PC-3 (cell line): ENCODE measurements at regions of chr1 and their contacts with region 1.

Region 1: GRCh38 chr1:8987881-8988617 is 38.2 kb downstream of the SLC2A7 start:
- DNase-seq: peak; percentile 64
- ATAC-seq: no peak; the same call in 1 of the 2 replicates
- H3K4me3 ChIP-seq: no peak overlapping the region
- H3K27ac ChIP-seq: peak overlapping the region; percentile 95
- H3K4me1 ChIP-seq: peaks cover 31% of the 10 kb centered on the region
- H3K27me3 ChIP-seq: no peaks in the 10 kb centered on the region
- CTCF ChIP-seq: peak; percentile 93

Region 2: DNA sequence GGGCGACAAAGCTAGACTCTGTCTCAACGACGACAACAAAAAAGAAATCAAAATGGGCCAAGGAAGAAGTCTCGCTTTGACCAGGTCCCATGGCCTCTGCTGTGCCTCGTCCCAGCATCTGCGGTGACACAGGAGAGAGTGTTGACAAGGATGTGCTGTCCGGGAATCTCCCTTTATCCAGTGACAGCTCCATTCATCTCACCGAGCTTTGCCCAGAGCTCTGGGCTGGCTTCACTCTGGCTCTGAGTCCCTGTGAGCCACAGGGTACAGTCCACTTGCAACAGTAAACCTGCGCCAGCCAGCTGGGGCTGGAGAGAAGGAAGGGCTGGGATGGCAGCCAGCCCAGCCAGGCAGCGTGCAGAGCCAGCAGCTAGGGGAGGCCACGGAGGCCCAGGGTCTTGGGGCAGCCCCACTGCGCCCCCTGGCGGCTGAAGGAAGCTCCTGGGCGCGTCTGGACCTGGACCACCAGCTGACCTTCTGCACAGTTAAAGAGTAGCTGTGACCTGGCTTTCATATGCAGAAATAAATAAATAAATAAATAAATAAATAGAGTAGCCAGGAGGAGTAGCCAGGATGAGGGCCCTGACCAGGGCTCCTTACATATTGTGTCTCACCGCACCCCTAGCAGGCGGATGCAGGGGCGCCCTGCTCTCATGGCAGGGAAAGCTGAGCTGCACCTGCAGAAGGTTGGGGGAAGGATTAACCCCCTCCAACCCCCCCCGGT is 139.2 kb before region 1 on chr1:
- CTCF ChIA-PET with region 1: interaction called, 11 read pairs
- POLR2A ChIA-PET with region 1: no interaction called
- intact Hi-C with region 1: no loop called
- DNase-seq: peak; percentile 91
- ATAC-seq: peak; percentile 98
- H3K4me3 ChIP-seq: no peak overlapping the region
- H3K27ac ChIP-seq: no peak overlapping the region
- H3K4me1 ChIP-seq: peaks cover 5% of the 10 kb centered on the region
- H3K27me3 ChIP-seq: no peaks in the 10 kb centered on the region
- CTCF ChIP-seq: peak; percentile 73

Region 3: DNA sequence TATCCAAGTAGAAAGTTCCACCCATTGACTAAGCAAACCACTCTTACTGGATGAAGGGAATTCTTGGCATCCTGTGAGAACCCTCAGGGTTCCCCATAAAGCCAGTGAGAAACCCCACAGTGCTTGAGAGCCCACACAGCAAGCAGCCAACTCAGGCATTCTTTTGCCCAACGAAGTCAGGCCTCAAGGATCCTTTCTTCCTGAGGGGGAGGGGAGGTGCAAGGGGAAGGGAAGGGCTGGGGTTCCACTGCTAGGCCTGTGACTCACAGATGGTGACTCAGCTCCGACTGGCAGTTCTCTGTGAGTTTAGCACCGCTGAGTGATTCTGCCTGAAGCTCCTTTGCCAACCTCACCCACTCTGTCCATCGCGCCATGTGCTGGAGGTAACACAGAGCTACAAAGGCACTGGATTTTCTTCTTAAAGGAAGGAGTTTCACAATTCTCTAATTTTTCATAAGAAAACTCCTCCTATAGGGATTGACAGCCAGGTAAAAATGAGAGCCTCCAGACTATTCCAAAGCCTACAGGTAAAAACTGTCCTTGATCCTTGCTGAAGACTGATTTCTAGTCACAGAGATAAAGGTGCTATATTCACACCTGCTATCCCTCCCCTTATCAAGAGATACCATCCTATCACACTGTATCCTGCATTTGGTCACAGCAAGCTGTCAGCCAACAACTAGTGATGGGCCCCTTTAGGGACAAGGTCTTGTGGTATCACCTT is 114.4 kb before region 1 on chr1:
- CTCF ChIA-PET with region 1: interaction called, 3 read pairs
- POLR2A ChIA-PET with region 1: no interaction called
- intact Hi-C with region 1: loop called (anchors 5 kb)
- DNase-seq: peak; percentile 99
- ATAC-seq: peak; percentile 75
- H3K4me3 ChIP-seq: peak overlapping the region; percentile 95
- H3K27ac ChIP-seq: peak overlapping the region; percentile 97
- H3K4me1 ChIP-seq: peaks cover 55% of the 10 kb centered on the region
- H3K27me3 ChIP-seq: no peaks in the 10 kb centered on the region
- CTCF ChIP-seq: no peak

Region 4: DNA sequence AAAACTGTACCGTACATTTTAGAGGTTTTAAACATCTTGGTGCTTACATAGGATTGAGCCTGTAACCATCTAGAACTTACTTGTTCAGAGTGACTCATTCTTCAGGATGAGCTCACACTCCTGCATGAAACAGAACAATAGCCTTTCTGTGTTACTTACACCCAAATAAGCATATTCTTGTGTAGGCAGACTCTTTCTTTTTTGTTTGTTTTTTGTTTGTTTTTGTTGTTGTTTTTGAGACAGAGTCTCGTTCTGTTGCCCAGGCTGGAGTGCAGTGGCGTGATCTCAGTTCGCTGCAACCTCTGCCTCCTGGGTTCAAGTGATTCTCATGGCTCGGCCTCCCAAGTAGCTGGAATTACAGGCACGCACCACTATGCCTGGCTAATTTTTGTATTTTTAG is 46.1 kb before region 1 on chr1:
- CTCF ChIA-PET with region 1: no interaction called
- POLR2A ChIA-PET with region 1: no interaction called
- intact Hi-C with region 1: loop called (anchors 1 kb)
- DNase-seq: peak; percentile 79
- ATAC-seq: peak; percentile 95
- H3K4me3 ChIP-seq: no peak overlapping the region
- H3K27ac ChIP-seq: peak overlapping the region; percentile 51
- H3K4me1 ChIP-seq: peaks cover 25% of the 10 kb centered on the region
- H3K27me3 ChIP-seq: no peaks in the 10 kb centered on the region
- CTCF ChIP-seq: no peak